ENCODE measurements at regions of chr9 and their contacts with region 1.

Region 1: DNA sequence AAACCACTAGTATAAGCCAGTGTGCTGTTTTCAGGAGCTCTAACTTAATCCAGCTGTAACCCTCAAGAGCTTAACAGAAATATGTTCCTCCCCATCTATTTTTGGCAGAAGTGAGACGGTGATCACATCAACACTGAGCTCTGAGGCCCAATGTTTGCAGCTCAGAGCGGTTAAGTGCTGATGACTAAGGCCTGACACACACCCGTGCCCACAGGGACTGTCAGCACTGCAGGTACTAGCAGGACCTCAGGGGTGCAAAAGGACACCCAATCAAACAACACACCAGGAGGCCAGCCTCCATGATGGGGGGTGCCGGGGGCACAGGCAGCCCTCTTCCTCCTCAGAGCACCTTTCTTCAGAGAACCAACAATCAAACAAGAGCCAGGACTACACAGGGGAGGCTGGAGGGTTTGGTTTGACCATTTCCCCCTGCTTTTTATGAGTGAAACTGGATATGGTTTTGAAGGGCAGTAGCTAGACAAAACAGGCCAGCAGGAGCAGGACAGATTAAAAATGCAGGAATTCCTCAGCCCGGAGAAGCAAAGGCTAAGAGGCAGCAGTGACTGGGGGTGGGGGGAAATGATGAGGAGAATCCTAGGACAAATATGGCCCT is 61.3 kb downstream of the RAPGEF1 start:
- DNase-seq: peak; percentile 71 to 91 (median 84)
- ATAC-seq: peak; percentile 86 to 98 (median 95)
- H3K4me3 ChIP-seq: peak overlapping the region in 1 of 12 donors; percentile 21
- H3K27ac ChIP-seq: peak overlapping the region; percentile 67 to 93 (median 86)
- H3K4me1 ChIP-seq: peaks cover 30 to 100% (median 81%) of the 10 kb centered on the region in 12 donors
- H3K27me3 ChIP-seq: no peaks in the 10 kb centered on the region
- CTCF ChIP-seq: no peak
- POLR2A ChIP-seq: peak in 1 of 2 donors; percentile 53

Region 2: GRCh38 chr9:131530920-131531832 is 147.4 kb before region 1 on chr9 and contains the start of gene UCK1:
- intact Hi-C with region 1: no loop called
- DNase-seq: peak; percentile 82 to 93 (median 85)
- ATAC-seq: peak; percentile 86 to 98 (median 98)
- H3K4me3 ChIP-seq: peak within 1 kb of the TSS; percentile 71 to 100 (median 96)
- H3K27ac ChIP-seq: peak within 1 kb of the TSS; percentile 20 to 96 (median 86)
- H3K4me1 ChIP-seq: peaks cover 3 to 20% (median 11%) of the 10 kb centered on the region in 12 donors
- H3K27me3 ChIP-seq: no peaks in the 10 kb centered on the region
- CTCF ChIP-seq: peak in 4 of 12 donors; percentile 1 to 22 (median 4)
- POLR2A ChIP-seq: peak in 1 of 2 donors; percentile 77
- total RNA-seq, gene UCK1: 16.4 to 45.1 (median 24.9) TPM

Region 3: GRCh38 chr9:131608493-131609037 is 70.0 kb before region 1 on chr9:
- intact Hi-C with region 1: loop called in 1 of 10 experiments (anchors 5 kb)
- DNase-seq: peak; percentile 71 to 90 (median 80)
- ATAC-seq: peak; percentile 73 to 81 (median 80)
- H3K4me3 ChIP-seq: peak overlapping the region in 5 of 12 donors; percentile 1 to 41 (median 19)
- H3K27ac ChIP-seq: peak overlapping the region; percentile 73 to 95 (median 84)
- H3K4me1 ChIP-seq: peaks cover 12 to 97% (median 59%) of the 10 kb centered on the region in 12 donors
- H3K27me3 ChIP-seq: no peaks in the 10 kb centered on the region
- CTCF ChIP-seq: no peak
- POLR2A ChIP-seq: no peak

Region 4: DNA sequence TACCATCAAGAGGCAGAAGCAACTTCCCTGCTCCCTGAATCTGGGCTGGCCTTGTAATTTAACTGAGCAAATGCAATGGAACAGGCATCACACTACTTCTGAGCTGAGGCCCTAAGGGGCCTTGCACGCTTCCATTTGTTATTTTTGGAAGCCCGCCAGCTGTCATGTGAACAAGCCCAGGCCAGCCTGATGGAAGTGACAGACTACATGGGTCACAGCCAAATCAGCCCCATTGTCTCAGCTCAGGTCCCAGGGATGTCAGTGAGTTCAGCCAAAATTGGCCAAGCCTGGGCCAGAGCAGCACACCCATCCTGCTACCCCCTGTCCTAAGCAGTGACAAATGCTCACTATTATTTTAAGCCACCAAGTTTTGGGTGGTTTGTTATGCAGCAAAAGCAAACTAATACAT is 60.5 kb before region 1 on chr9:
- intact Hi-C with region 1: loop called in 2 of 10 experiments (anchors 5 kb)
- DNase-seq: peak; percentile 76 to 91 (median 89)
- ATAC-seq: peak; percentile 83 to 96 (median 92)
- H3K4me3 ChIP-seq: no peak overlapping the region
- H3K27ac ChIP-seq: peak overlapping the region in 9 of 12 donors; percentile 11 to 74 (median 63)
- H3K4me1 ChIP-seq: peaks cover 0 to 37% (median 15%) of the 10 kb centered on the region in 12 donors
- H3K27me3 ChIP-seq: no peaks in the 10 kb centered on the region
- CTCF ChIP-seq: no peak
- POLR2A ChIP-seq: peak in 1 of 2 donors; percentile 17

Region 5: DNA sequence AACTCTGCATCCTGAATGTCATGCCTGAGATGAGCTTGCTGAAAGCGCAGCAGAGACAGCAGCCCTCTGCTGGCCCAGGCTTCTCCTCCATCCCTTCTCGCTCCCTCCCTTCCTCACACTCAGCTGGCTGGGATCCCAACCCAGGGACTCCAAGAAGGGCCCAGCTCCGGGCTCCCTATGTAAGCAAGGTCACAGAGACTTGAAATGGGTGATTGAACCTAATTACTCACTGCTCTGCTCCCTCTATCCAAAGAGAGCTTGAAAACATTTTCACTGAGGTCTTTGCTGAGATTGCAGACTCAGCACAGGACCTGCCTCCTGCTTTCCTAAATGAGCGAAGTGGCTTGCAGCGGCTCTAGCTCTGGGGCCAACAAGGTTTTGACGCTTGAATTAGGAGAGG is 18.5 kb after region 1 on chr9:
- intact Hi-C with region 1: loop called in 2 of 10 experiments (anchors 2 kb)
- DNase-seq: peak in 2 of 5 donors; percentile 55 to 72
- ATAC-seq: peak; percentile 24 to 62 (median 34)
- H3K4me3 ChIP-seq: no peak overlapping the region
- H3K27ac ChIP-seq: peak overlapping the region in 10 of 12 donors; percentile 47 to 93 (median 80)
- H3K4me1 ChIP-seq: peaks cover 11 to 99% (median 79%) of the 10 kb centered on the region in 12 donors
- H3K27me3 ChIP-seq: no peaks in the 10 kb centered on the region
- CTCF ChIP-seq: peak in 5 of 12 donors; percentile 11 to 42 (median 27)
- POLR2A ChIP-seq: no peak

Region 6: DNA sequence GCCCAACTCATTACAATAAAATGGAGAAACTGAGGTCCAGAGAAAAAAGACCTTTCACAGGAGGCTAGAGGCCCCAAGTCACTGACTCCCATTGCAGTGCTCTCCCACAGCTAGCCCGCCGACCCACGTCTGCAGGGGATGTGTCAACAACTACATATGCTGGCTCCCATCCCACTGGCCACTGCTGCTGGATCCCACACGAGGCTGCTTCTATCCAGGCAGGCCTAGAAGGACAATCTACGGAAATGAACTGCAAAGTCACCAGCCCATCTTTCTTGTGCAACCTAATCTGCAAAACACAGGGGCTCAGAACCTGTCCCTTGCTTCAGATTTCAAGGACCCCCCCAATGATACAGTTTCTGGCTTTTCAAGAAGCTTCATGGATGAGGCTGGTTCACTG is 37.3 kb after region 1 on chr9:
- intact Hi-C with region 1: loop called in 1 of 10 experiments (anchors 2 kb)
- DNase-seq: peak; percentile 63 to 76 (median 73)
- ATAC-seq: peak in 3 of 4 donors; percentile 25 to 34 (median 32)
- H3K4me3 ChIP-seq: no peak overlapping the region
- H3K27ac ChIP-seq: peak overlapping the region; percentile 12 to 93 (median 82)
- H3K4me1 ChIP-seq: peaks cover 11 to 98% (median 60%) of the 10 kb centered on the region in 12 donors
- H3K27me3 ChIP-seq: no peaks in the 10 kb centered on the region
- CTCF ChIP-seq: no peak
- POLR2A ChIP-seq: no peak

Region 7: GRCh38 chr9:131728961-131729360 is 50.4 kb after region 1 on chr9:
- intact Hi-C with region 1: loop called in 6 of 10 experiments (anchors 2 to 10 kb)
- DNase-seq: no peak
- ATAC-seq: peak in 3 of 4 donors; percentile 23 to 33 (median 23)
- H3K4me3 ChIP-seq: peak overlapping the region in 1 of 12 donors; percentile 27
- H3K27ac ChIP-seq: peak overlapping the region in 7 of 12 donors; percentile 0 to 96 (median 39)
- H3K4me1 ChIP-seq: peaks cover 18 to 99% (median 68%) of the 10 kb centered on the region in 12 donors
- H3K27me3 ChIP-seq: no peaks in the 10 kb centered on the region
- CTCF ChIP-seq: no peak
- POLR2A ChIP-seq: no peak

Region 8: DNA sequence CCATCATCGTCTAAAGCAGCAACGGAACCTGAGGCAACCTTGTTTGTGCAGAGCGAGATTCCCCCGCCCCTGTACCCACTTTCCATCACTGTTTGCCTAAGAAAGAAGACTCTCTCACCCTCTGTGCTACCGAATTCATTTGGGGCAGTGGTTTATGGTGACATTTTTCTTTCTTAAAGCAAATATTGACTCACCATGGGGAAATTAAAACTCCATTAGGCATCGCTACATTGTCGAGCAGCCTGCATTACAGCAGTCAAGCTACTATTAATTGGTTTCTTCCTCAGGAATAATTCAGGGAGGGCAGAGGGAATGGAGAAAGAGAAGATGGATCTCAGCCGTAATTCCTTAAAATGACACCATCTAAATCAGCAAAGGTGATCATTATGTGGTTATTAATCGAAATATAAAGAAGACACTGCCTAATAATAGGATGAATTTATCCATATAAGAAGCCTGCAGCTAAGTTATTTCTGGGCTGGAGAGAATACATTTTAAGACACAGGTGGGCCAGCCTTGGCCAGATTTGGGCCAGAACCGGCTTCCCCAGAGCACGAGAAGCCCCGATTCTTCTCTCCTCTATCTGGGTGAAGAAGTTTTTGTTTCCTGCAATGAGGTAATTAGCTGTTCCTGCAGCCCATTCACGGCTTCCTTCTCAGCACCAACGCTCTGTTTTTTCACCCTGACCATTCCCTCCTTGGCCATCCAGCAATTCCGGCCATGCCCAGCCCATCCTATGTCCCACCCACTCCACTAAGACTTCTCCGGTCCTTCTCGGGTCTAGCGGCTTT is 748.2 kb after region 1 on chr9:
- intact Hi-C with region 1: no loop called
- DNase-seq: no peak
- ATAC-seq: no peak
- H3K4me3 ChIP-seq: no peak overlapping the region
- H3K27ac ChIP-seq: no peak overlapping the region
- H3K4me1 ChIP-seq: no peaks in the 10 kb centered on the region
- H3K27me3 ChIP-seq: peaks cover 0 to 63% (median 0%) of the 10 kb centered on the region in 9 donors
- CTCF ChIP-seq: no peak
- POLR2A ChIP-seq: no peak

Measured in heart left ventricle (tissue), 16 donors.